AG04450 (cell line): ENCODE measurements at regions of chr11 and their contacts with region 1.

Region 1: DNA sequence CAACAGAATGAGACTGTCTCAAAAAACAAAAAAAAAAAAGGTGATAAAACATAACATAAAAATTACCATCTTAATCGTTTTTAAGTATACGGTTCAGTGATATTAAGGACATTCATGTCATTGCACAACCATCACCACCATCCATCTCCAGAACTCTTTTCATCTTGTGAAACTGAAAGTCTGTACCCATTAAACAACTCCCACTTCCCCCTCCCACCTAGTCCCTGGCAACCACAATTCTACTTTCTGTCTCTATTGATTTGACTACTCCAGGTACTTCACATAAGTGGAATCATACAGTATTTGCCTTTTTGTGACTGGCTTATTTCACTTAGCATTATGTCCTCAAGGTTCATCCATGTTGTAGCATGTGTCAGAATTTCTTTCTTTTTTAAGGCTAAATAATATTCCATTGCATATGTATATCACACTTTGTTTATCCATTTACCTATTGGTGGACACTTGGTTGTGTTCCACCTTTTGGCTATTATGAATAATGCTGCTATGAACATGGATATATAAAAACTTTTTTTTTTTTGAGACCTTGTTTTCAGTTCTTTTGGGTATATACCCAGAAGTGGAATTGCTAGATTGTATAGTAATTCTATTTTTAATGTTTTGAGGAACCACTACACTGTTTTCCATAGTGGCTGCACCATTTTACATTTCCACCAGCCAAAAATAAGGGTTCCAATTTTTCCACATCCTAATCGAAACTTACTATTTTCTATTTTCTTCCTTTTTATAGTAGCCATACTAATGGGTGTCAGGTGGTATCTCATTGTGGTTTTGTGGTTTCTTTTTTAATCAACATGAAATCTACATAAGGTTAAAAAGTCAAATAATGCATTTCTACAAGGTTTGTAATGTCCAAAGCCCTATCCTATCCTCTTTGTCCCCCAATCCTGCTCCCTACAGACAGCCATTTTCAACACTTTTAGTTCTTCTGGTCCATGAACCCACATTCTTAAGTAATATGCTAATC is 23.4 kb upstream of the PIK3C2A start:
- DNase-seq: no peak
- H3K4me3 ChIP-seq: no peak overlapping the region
- H3K27ac ChIP-seq: no peak overlapping the region
- H3K27me3 ChIP-seq: no peaks in the 10 kb centered on the region
- CTCF ChIP-seq: no peak

Region 2: DNA sequence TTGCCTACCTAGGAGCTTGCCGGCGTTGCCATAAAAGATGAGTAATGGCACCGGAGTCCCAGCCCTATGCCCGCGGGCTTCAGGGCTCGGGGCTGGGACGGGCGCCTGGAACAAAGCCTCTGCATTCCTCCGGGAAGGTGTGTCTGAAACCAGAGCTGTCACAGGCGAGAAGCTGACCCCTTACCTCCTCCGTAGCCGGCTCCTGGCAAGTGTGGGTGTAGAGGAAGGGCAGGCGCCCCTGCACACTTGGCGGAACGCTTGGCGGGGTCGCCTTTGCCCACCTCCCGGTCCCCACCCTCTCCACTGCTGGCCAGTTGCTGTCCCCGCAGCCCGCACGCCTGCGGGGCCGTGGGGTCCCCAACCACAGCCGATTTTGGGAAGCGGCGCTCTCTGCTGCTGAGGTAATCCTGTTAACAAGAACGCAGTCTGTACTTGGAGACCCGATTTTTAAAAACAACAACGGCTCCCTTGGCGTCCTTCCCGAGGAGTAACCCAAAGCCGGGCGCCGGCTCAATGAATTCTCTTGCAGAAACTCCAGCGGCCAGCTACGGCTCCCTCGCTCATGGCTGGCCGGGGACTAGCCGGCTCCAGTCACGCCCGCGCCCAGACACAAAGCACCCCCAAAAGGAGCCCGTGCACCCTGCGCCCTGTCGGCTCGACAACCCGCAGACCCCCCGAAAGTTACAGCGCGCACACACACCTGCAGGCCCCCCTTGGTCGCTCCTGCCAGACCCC is 306.2 kb before region 1 on chr11:
- CTCF ChIA-PET with region 1: no interaction called
- POLR2A ChIA-PET with region 1: interaction called, 10 read pairs
- DNase-seq: no peak
- H3K4me3 ChIP-seq: no peak overlapping the region
- H3K27ac ChIP-seq: no peak overlapping the region
- H3K27me3 ChIP-seq: peaks cover 44% of the 10 kb centered on the region
- CTCF ChIP-seq: no peak

Region 3: GRCh38 chr11:17154409-17155159 is 76.6 kb before region 1 on chr11:
- CTCF ChIA-PET with region 1: no interaction called
- POLR2A ChIA-PET with region 1: no interaction called
- DNase-seq: no peak
- H3K4me3 ChIP-seq: no peak overlapping the region
- H3K27ac ChIP-seq: no peak overlapping the region
- H3K27me3 ChIP-seq: no peaks in the 10 kb centered on the region
- CTCF ChIP-seq: no peak

Region 4: GRCh38 chr11:17244046-17244445 is 12.9 kb after region 1 on chr11:
- CTCF ChIA-PET with region 1: interaction called, 25 read pairs
- POLR2A ChIA-PET with region 1: no interaction called
- DNase-seq: no peak
- H3K4me3 ChIP-seq: no peak overlapping the region
- H3K27ac ChIP-seq: no peak overlapping the region
- H3K27me3 ChIP-seq: peaks cover 2% of the 10 kb centered on the region
- CTCF ChIP-seq: no peak

Region 5: DNA sequence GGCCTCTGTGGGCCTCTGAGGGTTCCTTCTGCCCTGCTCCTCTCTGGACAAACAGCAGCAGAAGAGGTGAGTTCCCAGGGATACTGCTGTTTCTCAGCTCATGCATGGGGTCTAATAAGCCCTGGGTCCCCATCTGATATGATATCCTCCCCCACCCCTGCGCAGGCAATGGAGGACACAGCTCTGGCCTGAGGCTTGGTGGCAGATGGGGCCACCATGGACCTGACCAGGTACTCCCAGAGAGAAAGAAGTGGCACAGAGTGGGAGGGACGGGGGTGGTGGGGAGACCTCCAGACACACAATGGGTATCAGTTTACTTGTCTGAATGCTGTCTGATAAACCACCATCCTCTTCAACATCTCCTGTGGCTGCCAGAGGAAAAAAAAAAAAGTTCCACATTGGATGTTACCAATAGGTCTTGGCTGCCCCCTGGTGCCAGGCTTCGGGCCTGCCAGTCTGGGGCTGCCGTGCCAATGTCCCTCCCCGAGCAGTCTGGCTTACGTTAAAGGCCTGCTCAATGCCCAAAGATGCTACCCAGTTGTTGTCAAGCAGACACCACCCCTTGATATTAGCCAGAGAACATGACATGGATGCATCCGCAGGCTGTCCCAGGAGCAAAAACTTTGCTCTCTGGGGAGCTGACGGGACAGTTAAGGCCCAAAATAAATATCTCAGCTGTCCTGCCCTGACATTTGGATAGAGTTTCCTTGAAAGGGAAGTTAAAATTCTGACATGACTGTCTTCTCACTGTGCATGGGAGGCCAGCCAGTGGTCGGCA is 273.4 kb after region 1 on chr11:
- CTCF ChIA-PET with region 1: interaction called, 11 read pairs
- POLR2A ChIA-PET with region 1: no interaction called
- DNase-seq: peak; percentile 6
- H3K4me3 ChIP-seq: no peak overlapping the region
- H3K27ac ChIP-seq: no peak overlapping the region
- H3K27me3 ChIP-seq: peaks cover 7% of the 10 kb centered on the region
- CTCF ChIP-seq: peak; percentile 89

Region 6: DNA sequence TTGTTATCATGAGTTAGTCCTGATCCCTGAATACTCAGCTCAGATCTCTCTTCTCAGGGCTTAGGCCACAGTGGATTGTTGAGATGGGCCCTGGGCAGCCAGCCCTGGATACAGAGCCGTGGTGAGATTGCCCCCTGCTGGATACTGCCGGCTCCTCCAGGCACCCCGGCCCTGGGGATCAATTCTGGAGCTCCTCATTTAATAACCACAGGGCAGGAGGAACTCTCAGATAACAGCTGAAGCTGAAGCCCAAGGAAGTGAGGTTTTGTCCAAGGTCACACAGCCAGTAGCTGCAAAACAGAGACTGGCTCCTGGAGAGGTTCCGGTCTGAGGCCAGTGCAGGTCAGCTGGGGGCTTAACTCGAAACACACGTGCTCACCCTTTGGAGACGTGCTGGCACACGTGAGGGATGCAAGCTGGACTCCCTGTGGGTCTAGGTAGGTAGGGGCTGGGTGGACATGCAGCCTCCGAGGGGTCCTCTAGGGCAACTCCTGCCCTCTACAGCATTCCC is 297.1 kb after region 1 on chr11:
- CTCF ChIA-PET with region 1: interaction called, 22 read pairs
- POLR2A ChIA-PET with region 1: no interaction called
- DNase-seq: no peak
- H3K4me3 ChIP-seq: no peak overlapping the region
- H3K27ac ChIP-seq: no peak overlapping the region
- H3K27me3 ChIP-seq: peaks cover 11% of the 10 kb centered on the region
- CTCF ChIP-seq: peak; percentile 71

Region 7: GRCh38 chr11:17703951-17704350 is 472.8 kb after region 1 on chr11:
- CTCF ChIA-PET with region 1: no interaction called
- POLR2A ChIA-PET with region 1: no interaction called
- DNase-seq: no peak
- H3K4me3 ChIP-seq: no peak overlapping the region
- H3K27ac ChIP-seq: no peak overlapping the region
- H3K27me3 ChIP-seq: no peaks in the 10 kb centered on the region
- CTCF ChIP-seq: no peak